ENCODE measurements at regions of chrX and their contacts with region 1.

Region 1: GRCh38 chrX:103220511-103221323 is 5.8 kb downstream of the BEX4 start:
- DNase-seq: peak in 1 of 2 experiments; percentile 28
- H3K4me3 ChIP-seq: no peak overlapping the region
- H3K27ac ChIP-seq: no peak overlapping the region
- H3K4me1 ChIP-seq: no peaks in the 10 kb centered on the region
- H3K27me3 ChIP-seq: no peaks in the 10 kb centered on the region
- CTCF ChIP-seq: no peak

Region 2: GRCh38 chrX:102976793-102977495 is 243.8 kb before region 1 on chrX:
- CTCF ChIA-PET with region 1: no interaction called
- POLR2A ChIA-PET with region 1: no interaction called
- intact Hi-C with region 1: no loop called
- DNase-seq: peak; percentile 51 to 81
- H3K4me3 ChIP-seq: no peak overlapping the region
- H3K27ac ChIP-seq: peak overlapping the region; percentile 52; the same call in 1 of the 2 replicates
- H3K4me1 ChIP-seq: peaks cover 21% of the 10 kb centered on the region; the same call in 1 of the 2 replicates
- H3K27me3 ChIP-seq: no peaks in the 10 kb centered on the region
- CTCF ChIP-seq: no peak

Region 3: DNA sequence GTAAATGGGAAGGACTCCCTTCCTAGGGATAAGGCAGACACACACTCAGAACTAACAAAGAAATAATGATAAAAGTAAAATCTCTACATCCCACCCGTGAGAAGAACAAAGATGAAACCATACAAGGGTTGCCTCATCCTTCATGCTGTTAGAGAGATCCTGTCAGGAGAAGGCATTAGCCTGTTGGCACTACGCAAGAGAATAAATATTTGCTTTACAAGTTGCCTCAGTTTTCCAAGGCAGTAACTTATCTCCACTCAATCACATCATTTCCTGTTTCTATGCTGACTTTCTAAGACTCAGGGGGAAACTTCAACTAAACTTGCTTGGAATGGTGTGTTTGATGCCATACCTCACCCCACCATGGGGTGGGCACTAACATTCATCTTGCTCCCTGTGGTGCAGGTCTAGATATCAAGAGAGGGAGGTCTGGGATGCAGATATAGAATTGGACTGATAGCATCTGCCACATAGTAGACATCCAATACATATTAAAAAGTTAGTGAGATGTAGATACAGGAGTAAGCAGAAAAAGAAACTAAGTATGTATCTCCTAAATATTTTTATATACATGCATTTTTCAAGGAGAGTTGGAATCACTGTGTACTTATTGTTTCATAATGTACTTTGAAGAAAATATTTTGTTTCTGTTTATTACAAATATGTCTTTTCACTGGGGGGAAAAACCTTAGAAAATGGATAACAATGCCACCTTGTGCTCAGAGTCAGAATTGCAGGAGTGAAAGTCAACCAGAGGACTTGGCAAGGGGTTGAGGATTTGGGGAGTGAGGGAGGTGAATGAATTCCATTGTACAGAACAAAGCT is 63.0 kb before region 1 on chrX:
- CTCF ChIA-PET with region 1: no interaction called
- POLR2A ChIA-PET with region 1: no interaction called
- intact Hi-C with region 1: no loop called
- DNase-seq: peak in 1 of 2 experiments; percentile 4
- H3K4me3 ChIP-seq: no peak overlapping the region
- H3K27ac ChIP-seq: no peak overlapping the region
- H3K4me1 ChIP-seq: no peaks in the 10 kb centered on the region
- H3K27me3 ChIP-seq: no peaks in the 10 kb centered on the region
- CTCF ChIP-seq: peak; percentile 78

Region 4: GRCh38 chrX:103293118-103293517 is 72.4 kb after region 1 on chrX:
- CTCF ChIA-PET with region 1: no interaction called
- POLR2A ChIA-PET with region 1: no interaction called
- intact Hi-C with region 1: loop called (anchors 10 kb)
- DNase-seq: no peak
- H3K4me3 ChIP-seq: no peak overlapping the region
- H3K27ac ChIP-seq: no peak overlapping the region
- H3K4me1 ChIP-seq: no peaks in the 10 kb centered on the region
- H3K27me3 ChIP-seq: no peaks in the 10 kb centered on the region
- CTCF ChIP-seq: no peak

Measured in PC-9 (cell line).